Mammary epithelial cell (primary cell): ENCODE measurements at regions of chr5 and their contacts with region 1.

Region 1: GRCh38 chr5:165871291-165871690 is 2365.9 kb downstream of the MAT2B start:
- DNase-seq: no peak
- H3K4me3 ChIP-seq: no peak overlapping the region
- H3K27ac ChIP-seq: no peak overlapping the region
- H3K4me1 ChIP-seq: no peaks in the 10 kb centered on the region
- H3K27me3 ChIP-seq: no peaks in the 10 kb centered on the region
- CTCF ChIP-seq: no peak

Region 2: DNA sequence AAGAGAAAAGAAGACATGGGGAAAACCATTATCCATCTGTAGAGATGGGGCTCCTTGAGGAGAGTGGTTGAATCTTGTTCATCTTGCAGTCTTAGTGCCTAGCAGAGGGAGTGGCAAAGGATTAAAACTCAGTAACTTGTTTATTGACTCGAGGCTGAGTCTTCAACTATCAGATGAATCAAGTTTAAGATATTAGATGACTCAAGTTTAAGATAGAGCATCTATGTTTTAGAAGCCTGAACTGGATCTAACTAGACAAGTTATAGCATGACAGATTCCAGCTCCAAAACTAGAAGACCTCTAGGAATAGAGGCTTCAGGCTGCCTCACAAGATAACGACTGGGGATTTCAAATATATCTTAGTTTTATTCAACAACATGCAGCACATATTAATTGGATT is 143.0 kb after region 1 on chr5:
- CTCF ChIA-PET with region 1: no interaction called
- dilution Hi-C with region 1: no loop called
- in situ Hi-C with region 1: no loop called
- intact Hi-C with region 1: no loop called
- DNase-seq: no peak
- H3K4me3 ChIP-seq: no peak overlapping the region
- H3K27ac ChIP-seq: no peak overlapping the region
- H3K4me1 ChIP-seq: peaks cover 7% of the 10 kb centered on the region
- H3K27me3 ChIP-seq: no peaks in the 10 kb centered on the region
- CTCF ChIP-seq: no peak

Region 3: GRCh38 chr5:167008705-167009104 is 1137.4 kb after region 1 on chr5:
- CTCF ChIA-PET with region 1: no interaction called
- dilution Hi-C with region 1: no loop called
- in situ Hi-C with region 1: no loop called
- intact Hi-C with region 1: loop called (anchors 5 kb)
- DNase-seq: no peak
- H3K4me3 ChIP-seq: no peak overlapping the region
- H3K27ac ChIP-seq: no peak overlapping the region
- H3K4me1 ChIP-seq: no peaks in the 10 kb centered on the region
- H3K27me3 ChIP-seq: no peaks in the 10 kb centered on the region
- CTCF ChIP-seq: no peak